Left cardiac atrium (tissue), 4 donors: ENCODE measurements at regions of chr17 and their contacts with region 1.

Region 1: GRCh38 chr17:4412933-4413831 is 20.6 kb upstream of the SPNS3 start:
- DNase-seq: peak; percentile 94
- ATAC-seq: peak; percentile 98 to 99

Region 2: GRCh38 chr17:4199818-4200402 is 213.3 kb before region 1 on chr17:
- intact Hi-C with region 1: loop called (anchors 5 kb)
- DNase-seq: no peak
- ATAC-seq: no peak

Region 3: DNA sequence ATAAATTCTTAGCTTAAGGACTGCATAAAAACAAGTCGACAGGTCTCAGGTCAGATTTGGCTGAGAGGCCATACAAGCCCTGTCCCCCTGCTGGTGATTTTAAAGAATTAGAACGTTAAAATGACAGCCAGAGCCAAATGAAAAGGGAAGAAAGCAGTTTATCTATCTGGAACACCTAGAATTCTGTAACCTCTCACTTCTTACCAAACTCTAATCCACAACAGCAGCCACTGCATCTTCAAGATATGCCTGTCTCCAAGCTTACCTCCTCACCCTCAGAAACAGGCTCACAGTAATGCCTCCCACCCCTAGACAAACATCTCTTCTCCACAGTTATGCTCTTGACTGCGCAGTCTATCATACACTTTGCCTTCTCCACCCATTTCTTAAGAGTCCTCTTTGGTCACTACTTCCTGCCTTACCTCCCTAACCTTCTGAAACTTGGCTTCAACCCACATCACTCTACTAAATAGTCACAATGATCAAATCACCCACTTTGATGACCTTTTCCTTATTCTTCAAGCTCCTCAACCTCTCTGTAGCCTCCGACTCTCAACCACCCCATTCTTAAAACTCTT is 163.6 kb before region 1 on chr17:
- intact Hi-C with region 1: no loop called
- DNase-seq: no peak
- ATAC-seq: no peak

Region 4: DNA sequence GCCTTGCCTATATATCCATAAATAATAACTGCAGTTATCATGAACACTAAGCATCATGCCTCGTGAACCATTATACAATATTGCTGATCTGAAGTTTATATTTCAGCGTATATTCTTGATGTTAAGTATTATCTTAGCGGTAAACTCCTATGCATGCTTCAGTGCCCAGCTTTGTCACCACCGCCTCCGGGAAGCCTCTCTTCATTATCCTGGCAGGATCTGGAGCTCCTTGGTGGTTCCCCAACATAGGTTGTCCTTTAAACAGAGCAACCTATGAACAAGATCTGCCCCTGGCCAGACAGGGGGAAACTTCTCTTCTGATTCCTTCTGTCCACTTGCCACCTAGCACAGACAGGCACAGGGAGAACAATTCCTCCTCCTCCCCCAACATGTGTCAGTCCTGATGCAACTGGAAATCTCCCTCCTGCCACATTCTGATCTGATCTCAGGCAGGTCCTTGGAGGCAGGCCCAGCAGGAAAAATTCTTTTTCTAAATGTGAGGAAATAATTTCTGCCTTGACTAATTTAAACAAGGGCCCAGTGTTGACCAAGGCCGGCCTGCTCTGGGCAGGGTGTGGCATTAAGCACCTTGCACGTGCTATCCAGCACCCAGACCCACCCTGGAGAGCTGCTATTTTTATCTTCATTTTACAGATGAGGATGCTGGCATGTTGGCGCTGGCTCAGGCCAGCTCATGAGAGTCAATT is 107.9 kb after region 1 on chr17:
- intact Hi-C with region 1: no loop called
- DNase-seq: no peak
- ATAC-seq: peak; percentile 20 to 65